Esophagus muscularis mucosa (tissue), 4 donors: ENCODE measurements at regions of chr5 and their contacts with region 1.

Region 1: GRCh38 chr5:7391814-7392692 is 3.9 kb upstream of the ADCY2 start:
- DNase-seq: peak; percentile 82
- H3K4me3 ChIP-seq: no peak overlapping the region
- H3K27ac ChIP-seq: no peak overlapping the region
- H3K4me1 ChIP-seq: peaks cover 9 to 32% (median 17%) of the 10 kb centered on the region in 4 donors
- H3K27me3 ChIP-seq: peaks cover 0 to 22% (median 0%) of the 10 kb centered on the region in 4 donors
- CTCF ChIP-seq: peak; percentile 55 to 66 (median 60)
- EP300 ChIP-seq: no peak
- POLR2A ChIP-seq: no peak

Region 2: DNA sequence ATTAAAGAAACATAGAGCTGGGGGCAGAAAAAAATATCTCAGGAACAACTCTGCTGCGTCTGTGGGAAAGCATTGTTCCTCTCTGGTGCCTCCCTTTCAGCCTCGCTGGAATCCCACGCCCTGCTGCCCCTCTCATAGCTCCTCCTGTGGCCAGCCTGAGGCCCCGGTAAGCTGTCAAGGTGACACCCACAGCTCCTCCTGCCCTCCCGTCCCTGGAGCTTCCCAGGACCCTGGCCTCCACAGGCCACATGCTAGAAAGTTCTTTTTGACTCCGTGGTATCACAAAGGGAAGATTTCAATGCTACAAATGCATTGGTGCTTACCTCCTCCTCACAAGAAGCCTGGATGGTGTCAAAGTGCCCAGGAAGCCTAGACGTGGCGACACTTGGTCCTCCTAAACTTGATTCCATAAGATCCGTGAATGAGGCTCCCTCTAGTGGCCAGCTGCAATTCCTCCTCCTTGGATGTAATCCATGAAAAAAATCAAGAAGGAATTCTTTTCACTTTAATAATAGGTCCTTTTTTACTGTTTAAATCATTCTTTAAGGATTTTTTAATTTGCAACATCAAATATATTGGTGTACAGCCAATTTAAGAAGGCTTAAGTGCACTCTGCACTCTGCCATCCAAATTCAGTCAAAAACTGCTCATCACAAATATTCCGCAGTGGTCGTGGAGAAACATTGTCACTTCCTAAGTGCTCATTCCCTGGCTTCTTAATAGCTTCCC is 354.0 kb after region 1 on chr5:
- intact Hi-C with region 1: loop called (anchors 5 kb)
- DNase-seq: no peak
- H3K4me3 ChIP-seq: no peak overlapping the region
- H3K27ac ChIP-seq: no peak overlapping the region
- H3K4me1 ChIP-seq: peaks cover 0 to 4% (median 0%) of the 10 kb centered on the region in 4 donors
- H3K27me3 ChIP-seq: no peaks in the 10 kb centered on the region
- CTCF ChIP-seq: peak; percentile 77 to 91 (median 87)
- EP300 ChIP-seq: no peak
- POLR2A ChIP-seq: no peak